MCF 10A (cell line): ENCODE measurements at regions of chr3 and their contacts with region 1.

Region 1: DNA sequence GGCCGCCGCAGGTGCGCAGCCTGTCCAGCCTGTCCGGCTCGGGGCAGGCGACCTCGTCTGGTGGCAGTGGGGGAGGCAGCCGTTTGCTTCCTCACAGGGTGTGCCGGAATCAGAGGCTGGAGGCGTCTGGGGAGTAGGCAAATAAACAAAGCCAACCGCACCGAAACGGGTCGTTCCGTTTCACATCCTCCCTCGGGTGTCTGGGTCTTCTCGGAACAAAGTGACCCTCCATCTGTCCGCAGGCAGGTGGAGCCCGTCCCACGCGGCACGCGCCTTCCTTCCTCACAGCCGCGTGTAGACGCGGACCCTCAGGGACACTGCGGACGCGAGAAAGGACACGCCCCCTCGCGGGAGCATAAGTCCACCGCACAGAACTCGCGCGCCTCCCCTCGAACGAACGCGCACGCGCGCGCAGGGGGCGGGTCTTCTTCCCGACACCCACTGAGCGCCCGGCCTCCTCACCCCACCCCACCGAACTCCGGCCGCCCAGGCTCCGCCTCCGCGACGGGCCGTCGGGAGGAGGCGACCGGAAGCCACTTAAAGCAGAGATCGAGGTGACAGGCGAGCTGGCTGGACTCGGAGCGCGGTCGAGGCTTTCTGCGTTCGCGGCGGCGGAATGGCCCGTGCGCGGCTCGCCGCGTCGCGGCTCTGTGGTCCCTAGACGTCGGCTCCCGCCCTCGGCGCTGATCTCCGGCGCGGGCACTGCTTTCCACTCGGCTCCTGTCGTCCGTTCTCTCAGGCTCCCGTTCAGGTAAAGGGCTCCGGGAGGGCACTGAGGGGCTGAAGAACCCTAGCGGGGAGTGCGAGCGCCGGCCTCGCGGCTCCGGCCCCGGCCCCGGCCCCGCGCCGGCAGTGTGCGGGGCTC is at the start of gene TIPARP:
- DNase-seq: peak; percentile 97
- H3K4me3 Mint-ChIP-seq: peak within 1 kb of the TSS; percentile 79
- H3K27ac Mint-ChIP-seq: peak within 1 kb of the TSS; percentile 89
- H3K4me1 Mint-ChIP-seq: peaks cover 20% of the 10 kb centered on the region
- H3K27me3 Mint-ChIP-seq: no peaks in the 10 kb centered on the region
- CTCF ChIP-seq: peak; percentile 40
- total RNA-seq, gene TIPARP: 41.6 and 50.0 TPM in 2 replicates

Region 2: GRCh38 chr3:156535162-156535627 is 139.1 kb before region 1 on chr3:
- CTCF ChIA-PET with region 1: interaction called, 4 read pairs
- POLR2A ChIA-PET with region 1: no interaction called
- intact Hi-C with region 1: loop called (anchors 5 kb)
- DNase-seq: peak; percentile 91
- H3K4me3 Mint-ChIP-seq: no peak overlapping the region
- H3K27ac Mint-ChIP-seq: peak overlapping the region; percentile 1
- H3K4me1 Mint-ChIP-seq: peaks cover 7% of the 10 kb centered on the region
- H3K27me3 Mint-ChIP-seq: no peaks in the 10 kb centered on the region
- CTCF ChIP-seq: no peak

Region 3: DNA sequence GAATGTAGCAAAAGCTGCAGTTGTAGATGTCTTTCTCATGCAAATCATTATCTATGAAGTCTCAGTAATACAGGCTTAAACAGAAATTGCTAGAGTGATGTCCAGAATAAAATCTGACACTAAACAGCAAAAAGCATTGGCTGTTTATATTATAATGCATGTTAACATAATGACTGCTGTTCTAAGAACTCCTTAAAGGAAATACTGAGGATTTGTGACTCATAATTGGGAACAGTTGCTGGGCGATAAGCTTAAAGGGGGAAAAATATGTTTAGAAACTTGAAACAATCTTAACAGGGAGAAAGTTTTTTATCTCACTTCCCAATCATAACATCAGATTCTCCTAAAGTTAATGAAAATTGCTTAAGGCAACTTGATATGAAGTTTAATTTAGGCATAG is 17.6 kb after region 1 on chr3:
- CTCF ChIA-PET with region 1: interaction called, 4 read pairs
- POLR2A ChIA-PET with region 1: interaction called, 122 read pairs
- intact Hi-C with region 1: no loop called
- DNase-seq: peak; percentile 47
- H3K4me3 Mint-ChIP-seq: peak overlapping the region; percentile 66
- H3K27ac Mint-ChIP-seq: peak overlapping the region; percentile 57
- H3K4me1 Mint-ChIP-seq: peaks cover 47% of the 10 kb centered on the region
- H3K27me3 Mint-ChIP-seq: no peaks in the 10 kb centered on the region
- CTCF ChIP-seq: no peak

Region 4: GRCh38 chr3:156816800-156817645 is 142.7 kb after region 1 on chr3:
- CTCF ChIA-PET with region 1: interaction called, 4 read pairs
- POLR2A ChIA-PET with region 1: interaction called, 103 read pairs
- intact Hi-C with region 1: loop called (anchors 1 kb)
- DNase-seq: peak; percentile 86
- H3K4me3 Mint-ChIP-seq: peak overlapping the region; percentile 82
- H3K27ac Mint-ChIP-seq: peak overlapping the region; percentile 95
- H3K4me1 Mint-ChIP-seq: peaks cover 41% of the 10 kb centered on the region
- H3K27me3 Mint-ChIP-seq: no peaks in the 10 kb centered on the region
- CTCF ChIP-seq: no peak

Region 5: DNA sequence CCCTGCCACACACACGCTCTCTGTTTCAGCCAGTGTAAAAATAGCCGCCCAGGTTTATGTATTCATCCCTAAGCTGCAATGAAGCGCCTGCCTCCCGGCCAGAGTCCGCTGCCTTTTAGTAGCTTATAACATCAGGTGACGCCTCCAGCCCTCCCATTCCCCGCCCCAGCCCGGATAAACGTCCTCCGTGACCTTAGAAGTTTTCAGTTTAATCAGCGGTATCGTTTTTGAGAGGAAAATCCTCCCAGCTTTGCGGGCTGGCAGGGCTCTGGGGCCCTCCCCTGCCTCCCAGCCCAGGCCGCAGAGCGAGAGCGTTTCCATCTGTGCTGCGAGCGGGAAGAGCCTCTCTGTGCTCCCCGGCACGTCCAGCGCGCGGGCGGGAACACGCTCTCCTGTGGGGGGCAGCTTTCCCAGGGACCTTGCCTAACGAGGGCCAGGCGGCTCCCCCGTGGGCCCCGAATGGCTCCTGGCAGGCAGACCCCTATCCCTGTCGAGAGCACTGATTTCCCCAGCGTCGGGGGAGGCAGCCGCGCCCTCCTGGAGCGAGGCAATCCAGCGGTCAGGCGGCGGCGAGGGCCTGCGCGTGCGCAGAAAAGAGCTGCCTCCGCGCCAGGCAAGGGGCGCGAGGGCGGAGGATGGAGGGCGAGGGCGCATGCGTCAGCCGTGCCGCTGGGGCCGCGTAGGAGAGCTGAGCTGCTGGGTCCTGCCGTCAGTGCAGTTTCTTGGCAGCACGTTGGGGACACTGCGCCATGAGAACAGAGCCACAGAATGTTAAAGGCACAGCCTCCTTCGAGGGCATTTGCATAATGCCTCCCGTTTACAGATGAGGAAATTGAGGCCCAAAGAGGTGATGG is 414.6 kb after region 1 on chr3:
- CTCF ChIA-PET with region 1: interaction called, 184 read pairs
- POLR2A ChIA-PET with region 1: interaction called, 134 read pairs
- intact Hi-C with region 1: no loop called
- DNase-seq: peak; percentile 87
- H3K4me3 Mint-ChIP-seq: peak overlapping the region; percentile 77
- H3K27ac Mint-ChIP-seq: peak overlapping the region; percentile 79
- H3K4me1 Mint-ChIP-seq: peaks cover 28% of the 10 kb centered on the region
- H3K27me3 Mint-ChIP-seq: no peaks in the 10 kb centered on the region
- CTCF ChIP-seq: no peak

Region 6: DNA sequence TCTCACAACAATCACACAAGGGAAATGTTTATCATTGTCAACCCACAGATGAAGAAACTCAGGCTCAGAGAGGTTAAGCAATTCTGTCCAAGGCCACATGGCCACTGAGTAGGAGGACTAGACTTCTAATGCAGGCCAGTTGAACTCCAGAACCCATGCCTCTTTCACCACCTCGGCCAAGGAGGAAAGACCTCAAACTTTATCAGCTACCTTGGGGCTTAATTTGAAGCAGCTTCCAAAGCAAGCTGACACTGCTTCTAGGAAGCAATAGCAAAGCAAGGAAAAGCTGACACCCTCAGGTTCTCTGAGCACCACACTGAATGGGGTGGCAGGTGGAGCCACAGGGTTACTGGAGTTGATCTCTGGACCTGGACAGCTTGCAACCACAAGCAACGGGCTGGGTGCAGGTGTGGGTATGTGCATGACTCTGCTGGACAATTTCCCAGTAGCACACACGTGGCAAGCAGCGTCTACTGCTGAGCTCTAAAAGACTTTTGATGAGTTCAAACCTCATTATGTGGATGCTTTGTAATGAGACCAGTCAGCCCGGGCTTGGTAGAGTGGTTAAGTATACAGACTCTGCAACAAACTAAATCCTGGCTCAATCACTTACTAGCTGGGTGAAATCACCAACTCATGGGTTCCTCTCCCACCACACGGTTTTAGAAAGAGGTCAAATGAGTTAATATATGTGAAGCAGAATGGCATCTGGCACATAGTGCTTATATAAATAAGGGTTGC is 462.5 kb after region 1 on chr3:
- CTCF ChIA-PET with region 1: interaction called, 56 read pairs
- POLR2A ChIA-PET with region 1: interaction called, 72 read pairs
- intact Hi-C with region 1: no loop called
- DNase-seq: peak; percentile 35
- H3K4me3 Mint-ChIP-seq: no peak overlapping the region
- H3K27ac Mint-ChIP-seq: no peak overlapping the region
- H3K4me1 Mint-ChIP-seq: peaks cover 27% of the 10 kb centered on the region
- H3K27me3 Mint-ChIP-seq: no peaks in the 10 kb centered on the region
- CTCF ChIP-seq: no peak